ENCODE measurements at regions of chr11 and their contacts with region 1.

Region 1: GRCh38 chr11:34091825-34092224 is 13.6 kb upstream of the NAT10 start:
- DNase-seq: no peak
- ATAC-seq: no peak
- H3K4me3 Mint-ChIP-seq: no peak overlapping the region
- H3K27ac Mint-ChIP-seq: peak overlapping the region; percentile 60
- H3K4me1 Mint-ChIP-seq: no peaks in the 10 kb centered on the region
- H3K27me3 Mint-ChIP-seq: no peaks in the 10 kb centered on the region

Region 2: GRCh38 chr11:34075178-34075820 is 16.5 kb before region 1 on chr11:
- CTCF ChIA-PET with region 1: interaction called, 5 read pairs
- POLR2A ChIA-PET with region 1: interaction called, 3 read pairs
- intact Hi-C with region 1: loop called in 1 of 2 experiments (anchors 2 kb)
- DNase-seq: no peak
- ATAC-seq: no peak
- H3K4me3 Mint-ChIP-seq: no peak overlapping the region
- H3K27ac Mint-ChIP-seq: peak overlapping the region; percentile 11
- H3K4me1 Mint-ChIP-seq: peaks cover 33% of the 10 kb centered on the region
- H3K27me3 Mint-ChIP-seq: no peaks in the 10 kb centered on the region

Measured in activated CD4-positive, alpha-beta T cell treated with anti-CD3 and anti-CD28 coated beads for 36 hours (primary cell).